Activated CD4-positive, alpha-beta memory T cell treated with anti-CD3 and anti-CD28 coated beads, Interleukin-2, amount 10 ng/mL, durations not matched to agents 7 days and 5 days (primary cell): ENCODE measurements at regions of chr3 and their contacts with region 1.

Region 1: DNA sequence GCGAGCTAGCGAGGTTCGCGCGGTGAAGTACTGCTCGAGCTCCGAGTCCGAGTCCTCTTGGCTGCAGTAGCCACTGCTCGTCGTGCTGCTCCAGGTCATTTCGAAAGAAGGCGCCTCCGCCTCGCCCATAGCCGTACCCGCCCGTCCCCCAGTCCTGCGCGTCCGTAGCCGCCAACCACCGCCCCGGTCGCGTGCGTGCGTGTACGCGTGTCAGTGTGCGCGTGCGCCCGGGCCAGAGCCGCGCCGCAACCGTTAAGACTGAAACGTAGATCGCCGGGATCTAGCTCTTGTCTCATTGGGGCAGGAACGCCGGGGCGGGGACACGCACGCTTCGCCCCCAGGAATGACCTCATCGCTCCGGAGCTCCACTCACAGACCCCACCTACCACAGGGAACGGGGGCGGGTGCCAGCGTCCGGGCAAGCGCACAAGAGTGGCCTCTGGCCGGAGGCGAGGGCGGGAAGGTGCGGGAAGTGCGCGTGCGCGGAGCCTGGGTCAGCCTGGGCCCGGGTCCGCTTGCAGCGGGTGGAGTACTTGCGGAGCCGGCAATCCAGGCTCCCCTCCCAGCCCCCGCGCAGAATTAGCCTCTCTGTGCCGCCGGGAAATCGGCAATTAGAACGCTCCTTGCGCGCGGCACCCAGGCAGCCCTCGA is 3.3 kb downstream of the RASSF1 start:
- DNase-seq: peak; percentile 97
- H3K4me3 Mint-ChIP-seq: peak overlapping the region; percentile 85
- H3K27ac Mint-ChIP-seq: peak overlapping the region; percentile 94
- H3K4me1 Mint-ChIP-seq: peaks cover 63% of the 10 kb centered on the region
- H3K27me3 Mint-ChIP-seq: no peaks in the 10 kb centered on the region

Region 2: DNA sequence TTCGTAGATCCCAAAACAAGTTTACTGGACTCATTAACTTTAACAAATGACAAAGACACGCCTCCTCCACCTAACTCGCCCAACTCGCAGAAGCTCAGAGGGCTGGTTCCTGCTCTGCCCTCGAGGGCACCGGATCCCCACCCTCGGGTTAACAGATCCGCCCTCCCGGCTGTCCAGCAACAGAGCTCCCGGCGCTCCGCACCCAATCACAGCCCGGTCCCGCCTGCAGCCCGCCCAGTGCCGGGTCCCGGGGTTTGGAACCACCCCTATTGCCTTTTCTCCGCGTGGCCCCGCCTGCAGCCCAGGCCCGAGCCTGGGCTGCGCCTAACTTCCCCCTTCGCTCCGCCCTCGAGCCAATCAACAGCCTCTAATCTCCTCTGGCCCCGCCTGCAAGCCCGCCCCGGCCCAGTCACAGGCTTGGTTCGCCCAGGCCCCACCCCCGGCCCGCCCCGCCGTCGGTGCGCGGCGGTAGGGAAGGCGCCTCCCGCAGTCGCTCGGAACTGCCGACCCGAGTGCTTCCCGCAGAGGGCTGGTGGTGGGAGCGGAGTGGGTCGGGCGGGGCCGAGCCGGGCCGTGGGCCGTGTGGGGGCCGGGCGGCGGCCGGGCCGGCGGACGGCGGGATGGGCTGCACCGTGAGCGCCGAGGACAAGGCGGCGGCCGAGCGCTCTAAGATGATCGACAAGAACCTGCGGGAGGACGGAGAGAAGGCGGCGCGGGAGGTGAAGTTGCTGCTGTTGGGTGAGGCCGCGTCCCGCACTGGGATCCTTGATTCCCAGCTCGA is 101.4 kb before region 1 on chr3 and contains the start of gene GNAI2:
- CTCF ChIA-PET with region 1: interaction called, 4 read pairs
- POLR2A ChIA-PET with region 1: interaction called, 36 read pairs
- DNase-seq: peak; percentile 99
- H3K4me3 Mint-ChIP-seq: peak within 1 kb of the TSS; percentile 99
- H3K27ac Mint-ChIP-seq: peak within 1 kb of the TSS; percentile 98
- H3K4me1 Mint-ChIP-seq: peaks cover 42% of the 10 kb centered on the region
- H3K27me3 Mint-ChIP-seq: no peaks in the 10 kb centered on the region
- total RNA-seq, gene GNAI2: 493 to 519 TPM

Region 3: GRCh38 chr3:50292159-50293078 is 44.9 kb before region 1 on chr3 and contains the start of gene IFRD2:
- CTCF ChIA-PET with region 1: interaction called, 5 read pairs
- POLR2A ChIA-PET with region 1: interaction called, 150 read pairs
- DNase-seq: peak; percentile 97
- H3K4me3 Mint-ChIP-seq: peak within 1 kb of the TSS; percentile 81
- H3K27ac Mint-ChIP-seq: peak within 1 kb of the TSS; percentile 91
- H3K4me1 Mint-ChIP-seq: peaks cover 38% of the 10 kb centered on the region
- H3K27me3 Mint-ChIP-seq: no peaks in the 10 kb centered on the region
- total RNA-seq, gene IFRD2: 40.6 to 45.0 TPM

Region 4: DNA sequence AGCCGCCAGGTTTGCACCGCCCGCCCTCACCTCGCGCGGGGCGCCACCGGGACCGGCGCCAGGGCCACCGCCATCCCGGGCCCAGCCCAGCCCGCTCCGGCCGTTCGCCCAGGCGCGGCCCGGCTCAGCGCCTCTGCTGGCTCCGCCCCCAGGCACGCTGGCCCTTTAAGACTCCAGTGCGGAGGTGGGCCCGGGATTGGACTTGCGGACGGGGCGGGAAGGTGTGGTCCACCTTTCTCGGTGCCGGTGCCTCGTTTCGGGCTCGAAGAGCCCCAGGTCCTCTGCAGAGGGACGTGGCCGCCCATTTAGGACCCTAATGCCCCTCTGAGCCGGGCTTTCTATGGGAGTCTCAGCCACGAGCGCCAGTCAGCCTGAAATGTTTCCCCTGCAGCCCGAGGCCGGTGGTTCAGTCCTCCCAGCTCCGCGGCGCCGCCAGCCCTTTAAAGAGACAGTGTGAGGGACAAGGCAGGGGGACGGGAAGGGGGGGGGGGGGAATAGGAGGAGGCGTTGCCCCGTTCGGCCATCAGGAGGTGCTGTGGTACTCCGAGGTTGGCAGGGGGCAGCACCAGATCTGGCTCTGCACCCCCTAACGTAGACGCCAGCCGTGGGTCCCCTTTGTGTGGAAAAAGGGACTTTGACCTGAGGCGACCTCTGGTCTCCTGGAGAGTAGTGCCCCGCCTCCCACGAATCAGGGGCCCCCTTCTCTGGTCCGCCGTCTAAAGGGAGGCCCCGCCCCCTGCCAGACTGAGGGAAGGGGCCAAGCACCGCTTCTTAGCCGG is 15.8 kb before region 1 on chr3:
- CTCF ChIA-PET with region 1: interaction called, 61 read pairs
- POLR2A ChIA-PET with region 1: interaction called, 704 read pairs
- DNase-seq: peak; percentile 85
- H3K4me3 Mint-ChIP-seq: peak overlapping the region; percentile 72
- H3K27ac Mint-ChIP-seq: peak overlapping the region; percentile 83
- H3K4me1 Mint-ChIP-seq: peaks cover 48% of the 10 kb centered on the region
- H3K27me3 Mint-ChIP-seq: no peaks in the 10 kb centered on the region

Region 5: DNA sequence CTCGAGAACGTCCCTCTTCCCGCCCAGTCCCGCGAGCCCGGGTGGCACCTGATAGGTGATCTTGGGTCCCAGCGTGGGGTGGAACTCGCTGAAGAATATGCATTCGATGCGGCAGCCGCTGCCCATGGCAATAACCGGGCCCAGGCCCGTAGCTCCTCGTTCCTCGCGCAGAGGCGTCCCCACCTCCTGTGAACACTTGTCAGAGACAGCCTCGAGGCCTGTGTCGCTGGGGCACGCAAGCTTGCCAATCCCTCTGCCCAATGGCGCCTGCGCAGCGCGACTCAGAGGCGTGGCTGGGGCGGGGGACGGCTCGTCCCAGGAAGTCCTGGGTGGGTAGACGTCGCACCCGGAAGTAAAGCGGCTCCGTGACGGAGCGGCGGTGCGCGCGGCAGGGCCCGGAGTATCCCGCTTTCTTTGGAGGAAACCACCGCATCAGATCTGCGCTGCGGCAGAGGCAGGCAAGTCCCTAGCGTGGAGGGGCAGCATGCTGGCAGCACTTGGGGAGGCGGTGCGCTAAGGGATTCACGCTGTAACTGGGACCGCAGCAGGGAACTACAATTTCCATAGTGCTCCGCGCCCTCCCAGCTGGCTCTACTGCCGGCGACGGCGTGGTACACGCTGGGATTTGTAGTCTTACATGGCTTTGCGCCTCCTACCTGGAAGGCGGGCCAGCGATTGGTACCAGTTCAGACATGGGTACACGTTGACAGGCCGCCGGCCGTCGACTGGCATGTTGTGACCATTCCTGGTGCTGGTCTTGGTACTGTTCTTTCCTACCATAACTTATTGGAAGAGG is 13.4 kb after region 1 on chr3 and contains the starts of genes CYB561D2 and NPRL2:
- CTCF ChIA-PET with region 1: interaction called, 65 read pairs
- POLR2A ChIA-PET with region 1: interaction called, 704 read pairs
- DNase-seq: peak; percentile 99
- H3K4me3 Mint-ChIP-seq: peak within 1 kb of the TSS; percentile 91
- H3K27ac Mint-ChIP-seq: peak within 1 kb of the TSS; percentile 93
- H3K4me1 Mint-ChIP-seq: peaks cover 66% of the 10 kb centered on the region
- H3K27me3 Mint-ChIP-seq: no peaks in the 10 kb centered on the region
- total RNA-seq, gene CYB561D2: 37.1 to 39.7 TPM
- total RNA-seq, gene NPRL2: 48.8 to 50.1 TPM

Region 6: GRCh38 chr3:50587806-50588758 is 250.8 kb after region 1 on chr3:
- CTCF ChIA-PET with region 1: no interaction called
- POLR2A ChIA-PET with region 1: interaction called, 29 read pairs
- DNase-seq: peak; percentile 81
- H3K4me3 Mint-ChIP-seq: peak overlapping the region; percentile 6
- H3K27ac Mint-ChIP-seq: peak overlapping the region; percentile 96
- H3K4me1 Mint-ChIP-seq: peaks cover 78% of the 10 kb centered on the region
- H3K27me3 Mint-ChIP-seq: no peaks in the 10 kb centered on the region